Activated naive CD4-positive, alpha-beta T cell treated with anti-CD3 and anti-CD28 coated beads for 36 hours (primary cell): ENCODE measurements at regions of chr20 and their contacts with region 1.

Region 1: DNA sequence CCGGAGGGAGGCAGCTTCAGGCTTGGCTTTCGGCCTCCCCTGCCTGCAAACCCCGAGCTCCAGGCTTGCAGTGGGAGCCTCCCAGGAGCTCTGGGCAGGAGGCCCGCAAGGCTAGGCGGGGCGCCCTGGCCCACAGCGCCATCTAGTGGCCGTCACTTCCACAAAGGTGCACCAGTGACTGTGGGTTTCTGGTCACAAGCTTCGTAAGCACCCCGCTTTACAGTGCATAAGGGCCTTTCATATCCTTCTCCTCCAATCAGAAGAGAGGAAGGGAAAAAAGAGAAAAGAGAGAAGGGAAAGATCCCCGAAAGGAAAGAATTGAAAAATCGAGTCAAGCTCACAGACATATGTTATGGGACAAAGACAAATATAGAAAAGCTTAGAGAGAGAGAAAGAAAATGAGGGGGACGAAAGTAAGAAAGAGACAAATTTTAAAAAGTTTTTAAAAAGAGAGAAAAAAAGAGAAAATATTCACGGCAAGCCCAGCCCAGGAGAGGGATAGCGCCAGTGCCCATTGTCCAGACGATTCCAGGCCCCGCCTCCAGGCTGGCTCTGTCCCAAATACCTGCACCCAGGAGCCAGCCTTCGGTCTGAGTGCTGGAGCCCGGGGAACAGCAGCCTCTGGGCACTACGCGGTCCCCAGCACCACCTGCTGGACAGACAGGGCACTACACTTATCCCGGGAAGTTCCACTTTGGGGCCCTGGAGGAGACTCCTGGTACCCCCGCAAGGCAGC is 207.1 kb downstream of the PREX1 start:
- DNase-seq: peak; percentile 86
- H3K4me3 Mint-ChIP-seq: peak overlapping the region; percentile 42
- H3K27ac Mint-ChIP-seq: no peak overlapping the region
- H3K4me1 Mint-ChIP-seq: peaks cover 4% of the 10 kb centered on the region
- H3K27me3 Mint-ChIP-seq: no peaks in the 10 kb centered on the region

Region 2: GRCh38 chr20:47663333-47664067 is 957.2 kb before region 1 on chr20:
- CTCF ChIA-PET with region 1: interaction called, 8 read pairs
- intact Hi-C with region 1: loop called (anchors 1 kb)
- DNase-seq: peak; percentile 88
- H3K4me3 Mint-ChIP-seq: no peak overlapping the region
- H3K27ac Mint-ChIP-seq: no peak overlapping the region
- H3K4me1 Mint-ChIP-seq: no peaks in the 10 kb centered on the region
- H3K27me3 Mint-ChIP-seq: no peaks in the 10 kb centered on the region

Region 3: DNA sequence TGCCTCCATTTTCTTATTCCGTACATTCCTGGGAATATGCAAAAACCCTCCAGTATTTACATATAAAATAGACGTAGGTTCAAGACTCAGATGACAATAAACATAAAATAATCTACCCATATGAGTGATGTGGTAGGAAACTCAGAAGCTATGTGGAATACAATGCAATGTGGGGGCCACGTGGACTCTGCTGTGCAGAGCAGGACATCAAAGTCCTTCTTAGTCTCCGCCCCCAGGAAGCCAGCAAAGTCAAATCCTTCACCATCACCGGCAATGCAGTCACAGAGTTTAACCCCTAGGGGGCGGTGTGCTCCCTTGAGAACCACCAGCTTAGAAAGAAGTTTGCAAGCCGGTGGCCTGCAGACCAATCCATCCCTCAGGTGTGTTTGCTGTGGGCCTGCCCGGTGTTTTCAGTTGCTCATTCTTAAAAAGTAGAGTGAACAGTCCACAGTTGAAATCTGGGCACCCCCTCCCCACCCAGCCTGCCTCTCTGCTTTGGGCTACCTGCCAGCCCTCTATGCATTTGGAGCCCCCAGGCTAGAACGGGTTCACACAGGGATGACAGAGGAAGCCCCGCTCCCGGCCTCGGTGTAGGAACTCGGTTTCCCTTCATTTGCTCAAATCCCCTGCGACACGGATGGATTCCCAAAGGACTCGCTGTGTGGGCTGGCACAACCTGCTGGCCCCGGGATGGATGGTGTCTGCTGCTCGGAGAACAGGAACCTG is 895.3 kb before region 1 on chr20:
- CTCF ChIA-PET with region 1: interaction called, 15 read pairs
- intact Hi-C with region 1: loop called (anchors 1 kb)
- DNase-seq: peak; percentile 91
- H3K4me3 Mint-ChIP-seq: no peak overlapping the region
- H3K27ac Mint-ChIP-seq: no peak overlapping the region
- H3K4me1 Mint-ChIP-seq: peaks cover 22% of the 10 kb centered on the region
- H3K27me3 Mint-ChIP-seq: no peaks in the 10 kb centered on the region

Region 4: DNA sequence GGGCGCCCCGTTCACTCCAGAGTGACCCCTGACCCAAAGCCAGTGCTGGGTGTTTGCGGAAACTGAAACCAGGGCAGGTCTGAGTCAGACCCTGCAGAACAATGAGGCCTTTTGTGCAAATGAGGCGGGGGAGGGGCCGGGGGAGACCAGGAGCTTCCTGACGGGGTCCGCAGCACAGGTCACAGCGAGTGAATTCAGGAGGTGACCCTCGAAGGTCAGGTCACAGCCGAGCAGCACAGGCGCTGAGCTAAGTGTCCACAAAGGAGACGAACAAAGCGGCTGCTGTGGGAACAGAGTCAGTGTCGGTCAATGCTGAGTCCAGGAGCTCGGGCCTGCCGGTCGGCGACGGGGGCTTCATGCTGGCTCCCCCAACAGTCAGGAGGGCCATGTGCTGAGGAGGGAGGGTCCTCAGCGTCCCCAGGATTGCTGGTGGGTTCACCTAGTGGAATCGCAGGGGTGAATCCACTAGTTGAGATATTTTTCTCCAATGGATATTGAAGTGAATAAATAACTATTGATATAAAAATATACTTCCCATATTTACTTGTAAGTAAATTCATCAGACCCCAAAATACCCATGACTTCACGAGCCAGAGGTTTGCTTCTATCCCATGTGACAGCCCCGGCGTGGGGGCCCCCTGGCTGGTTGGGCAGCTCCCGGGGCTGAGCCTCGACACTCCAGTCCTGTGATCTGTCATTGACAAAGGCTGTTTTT is 647.0 kb before region 1 on chr20:
- CTCF ChIA-PET with region 1: interaction called, 5 read pairs
- intact Hi-C with region 1: loop called (anchors 10 kb)
- DNase-seq: no peak
- H3K4me3 Mint-ChIP-seq: no peak overlapping the region
- H3K27ac Mint-ChIP-seq: no peak overlapping the region
- H3K4me1 Mint-ChIP-seq: peaks cover 7% of the 10 kb centered on the region
- H3K27me3 Mint-ChIP-seq: peaks cover 15% of the 10 kb centered on the region

Region 5: GRCh38 chr20:48635433-48636310 is 15.0 kb after region 1 on chr20:
- CTCF ChIA-PET with region 1: interaction called, 10 read pairs
- intact Hi-C with region 1: no loop called
- DNase-seq: peak; percentile 78
- H3K4me3 Mint-ChIP-seq: no peak overlapping the region
- H3K27ac Mint-ChIP-seq: peak overlapping the region; percentile 33
- H3K4me1 Mint-ChIP-seq: peaks cover 4% of the 10 kb centered on the region
- H3K27me3 Mint-ChIP-seq: no peaks in the 10 kb centered on the region